Endothelial cell of umbilical vein (primary cell): ENCODE measurements at regions of chr14 and their contacts with region 1.

Region 1: DNA sequence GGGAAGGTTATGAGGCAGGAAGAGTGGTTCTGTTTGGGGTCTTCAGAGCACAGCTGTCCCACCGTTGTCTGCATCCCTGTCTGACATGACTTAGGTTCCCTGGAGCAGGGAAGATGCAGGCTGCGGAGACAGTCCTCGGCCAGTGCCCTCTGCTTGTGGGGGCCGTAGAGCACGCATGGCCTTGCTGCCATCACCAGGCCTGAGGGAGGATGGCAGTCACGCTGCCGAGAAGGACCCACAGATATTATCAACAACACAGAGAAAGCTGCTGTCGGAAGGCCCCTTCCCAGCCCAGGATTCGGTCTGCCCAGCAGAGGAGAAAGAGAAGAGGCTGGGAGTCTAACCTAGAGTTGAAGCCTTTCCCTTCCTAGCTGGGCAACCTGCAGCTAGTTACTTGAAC is 35.0 kb downstream of the ERH start:
- DNase-seq: no peak
- H3K4me3 ChIP-seq: no peak overlapping the region
- H3K27ac ChIP-seq: no peak overlapping the region
- H3K4me1 ChIP-seq: no peaks in the 10 kb centered on the region
- H3K27me3 ChIP-seq: peaks cover 0 to 2% of the 10 kb centered on the region in 2 experiments
- CTCF ChIP-seq: peak in 1 of 2 donors; percentile 17
- POLR2A ChIP-seq: no peak

Region 2: DNA sequence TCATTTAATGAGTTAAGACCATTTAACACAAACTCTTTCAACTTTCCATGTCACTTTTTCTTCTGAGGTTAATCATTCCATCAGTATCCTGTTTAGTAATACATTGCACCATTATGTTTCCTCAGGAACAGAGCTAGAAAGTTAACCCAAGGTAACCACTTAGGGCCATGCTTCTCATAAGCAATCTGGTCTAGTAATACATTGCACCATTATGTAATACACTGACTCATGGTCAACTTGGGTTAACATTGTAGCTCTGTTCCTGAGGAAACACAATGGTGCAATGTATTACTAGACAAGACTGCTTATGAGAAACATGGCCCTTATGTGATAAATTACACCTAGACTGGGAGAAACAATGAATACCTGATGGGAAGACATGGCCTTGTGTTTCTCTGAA is 13.4 kb after region 1 on chr14:
- CTCF ChIA-PET with region 1: no interaction called
- POLR2A ChIA-PET with region 1: interaction called, 19 read pairs
- dilution Hi-C with region 1: no loop called
- intact Hi-C with region 1: no loop called
- DNase-seq: no peak
- H3K4me3 ChIP-seq: no peak overlapping the region
- H3K27ac ChIP-seq: no peak overlapping the region
- H3K4me1 ChIP-seq: no peaks in the 10 kb centered on the region
- H3K27me3 ChIP-seq: no peaks in the 10 kb centered on the region
- CTCF ChIP-seq: no peak
- POLR2A ChIP-seq: no peak

Region 3: GRCh38 chr14:69441948-69442347 is 78.9 kb after region 1 on chr14:
- CTCF ChIA-PET with region 1: no interaction called
- POLR2A ChIA-PET with region 1: no interaction called
- dilution Hi-C with region 1: no loop called
- intact Hi-C with region 1: no loop called
- DNase-seq: no peak
- H3K4me3 ChIP-seq: no peak overlapping the region
- H3K27ac ChIP-seq: no peak overlapping the region
- H3K4me1 ChIP-seq: peaks cover 5% of the 10 kb centered on the region
- H3K27me3 ChIP-seq: no peaks in the 10 kb centered on the region
- CTCF ChIP-seq: no peak
- POLR2A ChIP-seq: no peak